ENCODE measurements at regions of chr4 and their contacts with region 1.

Region 1: GRCh38 chr4:306551-306961 is 1.3 kb upstream of the ZNF732 start:
- DNase-seq: peak; percentile 99
- H3K4me3 ChIP-seq: peak overlapping the region; percentile 46
- H3K27ac ChIP-seq: peak overlapping the region; percentile 87
- H3K4me1 ChIP-seq: peaks cover 25% of the 10 kb centered on the region
- CTCF ChIP-seq: no peak

Region 2: DNA sequence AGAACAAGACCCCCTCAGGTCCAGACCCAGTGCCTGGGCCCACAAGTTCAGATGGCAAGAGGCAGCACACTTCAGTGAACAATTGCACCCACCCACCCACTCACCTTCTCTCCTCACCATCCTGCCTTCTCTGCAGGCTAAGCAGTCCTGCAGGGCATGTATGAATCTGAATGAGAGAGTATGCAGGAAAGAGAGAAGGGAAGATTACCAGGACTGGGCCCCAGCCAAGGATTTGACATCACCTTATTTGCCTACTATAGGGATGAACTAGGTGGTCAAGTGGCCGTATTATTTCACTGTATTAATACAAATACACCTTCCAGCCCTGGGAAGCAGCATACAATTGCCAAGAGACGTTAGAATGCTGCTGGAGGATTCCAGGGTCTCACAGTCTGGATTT is 29.0 kb after region 1 on chr4:
- CTCF ChIA-PET with region 1: no interaction called
- POLR2A ChIA-PET with region 1: interaction called, 3 read pairs
- intact Hi-C with region 1: loop called (anchors 1 kb)
- DNase-seq: no peak
- H3K4me3 ChIP-seq: no peak overlapping the region
- H3K27ac ChIP-seq: no peak overlapping the region
- H3K4me1 ChIP-seq: peaks cover 6% of the 10 kb centered on the region
- CTCF ChIP-seq: no peak

Region 3: DNA sequence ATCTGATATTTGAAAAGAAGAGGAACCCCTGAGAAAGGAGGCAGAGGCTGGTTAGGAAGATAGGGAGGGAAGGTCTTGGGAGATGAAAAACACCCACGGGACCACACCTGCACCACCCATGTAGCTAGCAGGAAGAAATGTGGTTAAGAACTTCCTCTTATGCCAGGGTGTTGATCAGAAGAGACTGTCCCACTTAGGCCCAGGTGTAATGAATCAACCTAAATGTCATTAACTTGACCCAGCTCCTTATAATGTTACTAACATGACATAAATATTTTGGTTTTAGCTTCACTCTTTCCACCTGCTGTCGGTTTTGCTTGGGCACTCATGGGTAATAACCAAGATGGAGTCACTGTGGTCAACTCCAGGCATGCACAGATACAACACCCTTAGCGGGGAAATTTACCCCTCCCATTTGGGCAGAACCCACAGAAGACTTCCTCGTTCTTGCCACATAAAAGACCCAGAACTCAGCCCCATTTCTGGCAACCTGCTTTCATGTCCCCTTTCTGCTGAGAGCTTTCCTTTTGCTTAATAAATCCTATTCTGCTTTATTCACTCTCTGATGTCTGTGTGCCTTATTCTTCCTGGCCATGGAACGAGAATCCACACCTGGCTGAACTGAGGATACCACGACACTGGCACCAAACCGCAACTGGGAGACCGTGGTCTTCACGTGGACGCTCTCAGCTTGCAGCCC is 77.9 kb after region 1 on chr4:
- CTCF ChIA-PET with region 1: no interaction called
- POLR2A ChIA-PET with region 1: no interaction called
- intact Hi-C with region 1: loop called (anchors 1 kb)
- DNase-seq: peak; percentile 97
- H3K4me3 ChIP-seq: peak overlapping the region; percentile 31
- H3K27ac ChIP-seq: peak overlapping the region; percentile 95
- H3K4me1 ChIP-seq: peaks cover 29% of the 10 kb centered on the region
- CTCF ChIP-seq: no peak

Region 4: DNA sequence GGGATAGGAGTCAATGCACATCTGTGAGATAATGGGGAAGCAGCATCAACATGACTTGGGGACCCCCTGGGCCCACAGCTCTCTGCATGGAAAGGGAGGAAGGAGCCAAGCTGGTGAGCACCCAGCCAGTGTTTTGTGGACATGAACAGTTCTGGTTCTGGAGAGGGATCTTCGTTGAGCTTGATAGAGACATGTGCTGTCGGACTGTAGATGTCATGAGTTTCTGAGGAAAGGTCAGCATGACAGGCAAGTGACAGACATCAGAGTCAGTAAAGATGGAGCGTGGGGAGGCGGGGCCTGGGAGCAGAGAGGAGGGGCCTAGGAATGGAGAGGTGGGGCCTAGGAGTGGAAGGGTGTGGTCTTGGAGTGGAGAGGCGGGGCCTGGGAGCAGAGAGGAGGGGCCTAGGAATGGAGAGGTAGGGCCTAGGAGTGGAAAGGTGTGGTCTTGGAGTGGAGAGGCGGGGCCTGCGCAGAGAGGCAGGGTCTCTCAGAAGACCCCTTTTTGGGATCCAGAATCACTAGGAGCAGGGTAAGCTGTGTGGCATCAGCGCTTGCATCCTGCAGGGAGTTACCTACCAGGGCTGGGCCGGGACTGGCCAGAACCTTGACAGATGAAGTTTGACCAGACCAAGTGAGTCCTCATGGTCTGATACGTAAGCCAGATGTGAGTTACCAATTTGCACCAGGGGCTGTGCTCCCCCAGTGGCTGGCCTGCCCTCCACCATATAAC is 226.2 kb after region 1 on chr4:
- CTCF ChIA-PET with region 1: no interaction called
- POLR2A ChIA-PET with region 1: no interaction called
- intact Hi-C with region 1: no loop called
- DNase-seq: no peak
- H3K4me3 ChIP-seq: no peak overlapping the region
- H3K27ac ChIP-seq: no peak overlapping the region
- H3K4me1 ChIP-seq: no peaks in the 10 kb centered on the region
- CTCF ChIP-seq: no peak